Activated T-helper 2 cell treated with anti-CD3 and anti-CD28 coated beads, Interferon-gamma antibody, Interleukin-2, Interleukin-4, amounts not matched to agents 10 μg/mL and 5 μg/mL and 100 μg/mL, durations not matched to agents 14 hours and 24 hours and 36 hours (primary cell): ENCODE measurements at regions of chr5 and their contacts with region 1.

Region 1: DNA sequence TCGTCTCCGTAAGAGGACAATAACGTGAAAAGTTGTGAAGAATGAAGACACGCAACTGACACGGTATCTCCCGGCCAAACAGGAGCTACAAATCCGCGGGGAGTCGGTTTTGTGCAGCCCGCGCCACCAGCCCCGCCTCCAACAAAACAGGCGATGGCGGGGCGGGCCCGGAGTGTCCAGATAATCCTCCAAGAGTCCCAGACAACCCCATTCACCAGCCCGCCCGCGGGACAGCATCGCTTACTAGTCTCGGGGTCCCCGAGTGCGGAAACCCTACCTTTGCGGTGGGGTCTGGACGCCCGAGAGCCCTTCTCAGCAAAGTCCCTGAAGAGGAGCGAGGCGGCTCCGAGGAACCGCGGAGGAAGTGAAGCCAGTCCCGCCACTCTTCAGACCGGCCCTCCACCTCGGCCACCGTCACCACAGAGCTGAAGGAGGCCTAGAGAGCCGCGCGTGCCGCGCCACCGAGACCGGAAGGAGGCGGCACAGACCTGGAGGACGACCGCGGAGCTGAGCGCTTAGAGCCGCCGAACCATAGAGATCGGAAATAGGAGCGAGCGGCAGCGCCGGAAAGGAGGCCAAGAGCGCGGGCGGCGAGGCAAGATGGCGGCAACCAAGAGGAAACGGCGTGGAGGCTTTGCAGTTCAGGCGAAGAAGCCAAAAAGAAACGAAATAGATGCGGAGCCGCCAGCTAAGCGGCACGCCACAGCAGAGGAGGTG is at the starts of genes BRIX1 and RAD1:
- DNase-seq: peak; percentile 95
- H3K4me3 Mint-ChIP-seq: peak within 1 kb of the TSS; percentile 78
- H3K27ac Mint-ChIP-seq: peak within 1 kb of the TSS; percentile 56
- H3K4me1 Mint-ChIP-seq: peaks cover 18% of the 10 kb centered on the region
- H3K27me3 Mint-ChIP-seq: no peaks in the 10 kb centered on the region
- total RNA-seq, gene BRIX1: 86.2 and 91.8 TPM in 2 replicates
- total RNA-seq, gene RAD1: 37.6 and 42.3 TPM in 2 replicates

Region 2: DNA sequence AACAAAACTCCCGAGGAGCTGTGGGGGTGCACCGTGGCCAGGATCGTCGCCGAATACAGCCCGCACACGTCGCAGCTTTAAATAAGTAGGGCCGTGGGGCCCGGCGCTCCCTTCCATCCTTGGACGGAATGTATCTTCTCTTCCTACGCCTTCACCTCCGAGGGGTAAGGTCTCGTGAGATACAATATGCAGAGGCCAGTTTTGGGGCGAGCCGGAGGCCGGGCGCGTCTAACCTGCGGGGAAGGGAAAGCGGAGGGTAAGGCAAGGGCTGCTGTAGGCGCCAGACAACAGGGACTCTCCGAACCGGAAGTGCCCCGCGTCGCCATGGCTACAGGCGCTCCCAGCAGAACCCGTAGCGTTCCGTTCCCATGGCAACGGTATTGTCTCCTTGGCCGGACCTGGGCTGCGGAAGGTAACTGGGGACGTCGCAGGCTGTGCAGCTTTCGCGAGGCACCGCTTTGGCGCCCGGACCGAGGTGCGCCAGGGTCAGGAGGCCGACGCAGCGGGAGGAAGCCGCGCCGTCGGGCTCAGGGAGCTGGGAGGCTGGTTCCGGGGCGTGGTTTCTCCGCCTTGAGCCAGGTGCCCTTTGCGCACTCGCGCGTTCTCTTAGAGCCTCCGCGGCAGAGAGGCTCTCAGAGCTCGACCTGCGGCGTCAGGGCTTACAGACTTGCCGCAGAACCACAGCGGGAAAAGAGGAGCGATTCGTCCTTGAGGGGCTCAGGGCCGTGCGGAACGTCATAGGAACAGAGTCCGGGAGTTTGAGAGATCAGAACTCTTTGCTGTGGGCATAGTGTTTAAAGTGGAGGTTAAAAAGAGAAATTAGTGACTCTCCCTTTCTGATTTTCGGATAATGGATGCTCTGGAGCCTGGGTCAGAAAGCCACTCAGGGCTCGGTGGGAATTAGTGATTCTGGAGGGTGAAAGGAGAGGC is 76.2 kb before region 1 on chr5 and contains the start of gene TTC23L:
- intact Hi-C with region 1: loop called (anchors 2 kb)
- DNase-seq: peak; percentile 85
- H3K4me3 Mint-ChIP-seq: peak within 1 kb of the TSS; percentile 88
- H3K27ac Mint-ChIP-seq: peak within 1 kb of the TSS; percentile 65
- H3K4me1 Mint-ChIP-seq: peaks cover 10% of the 10 kb centered on the region
- H3K27me3 Mint-ChIP-seq: peaks cover 13% of the 10 kb centered on the region
- total RNA-seq, gene TTC23L: not detected in 2 replicates

Region 3: GRCh38 chr5:34929150-34929719 is 13.9 kb after region 1 on chr5 and contains the start of gene DNAJC21:
- intact Hi-C with region 1: loop called (anchors 1 kb)
- DNase-seq: peak; percentile 97
- H3K4me3 Mint-ChIP-seq: peak within 1 kb of the TSS; percentile 96
- H3K27ac Mint-ChIP-seq: peak within 1 kb of the TSS; percentile 92
- H3K4me1 Mint-ChIP-seq: peaks cover 37% of the 10 kb centered on the region
- H3K27me3 Mint-ChIP-seq: no peaks in the 10 kb centered on the region
- total RNA-seq, gene DNAJC21: 62.7 and 65.2 TPM in 2 replicates